B cell (primary cell): ENCODE measurements at regions of chr5 and their contacts with region 1.

Region 1: GRCh38 chr5:141618804-141619554 is at the start of gene DIAPH1:
- DNase-seq: peak; percentile 99
- ATAC-seq: peak; percentile 89
- H3K4me3 ChIP-seq: peak within 1 kb of the TSS; percentile 84 to 98 (median 94)
- H3K4me3 Mint-ChIP-seq: peak within 1 kb of the TSS; percentile 93
- H3K27ac ChIP-seq: peak within 1 kb of the TSS; percentile 86 to 92
- H3K27ac Mint-ChIP-seq: peak within 1 kb of the TSS; percentile 91
- H3K4me1 ChIP-seq: peaks cover 52 to 55% of the 10 kb centered on the region in 2 donors
- H3K4me1 Mint-ChIP-seq: peaks cover 59% of the 10 kb centered on the region
- H3K27me3 ChIP-seq: no peaks in the 10 kb centered on the region
- H3K27me3 Mint-ChIP-seq: no peaks in the 10 kb centered on the region
- CTCF ChIP-seq: peak; percentile 94
- total RNA-seq, gene DIAPH1: 111 and 113 TPM in 2 replicates

Region 2: DNA sequence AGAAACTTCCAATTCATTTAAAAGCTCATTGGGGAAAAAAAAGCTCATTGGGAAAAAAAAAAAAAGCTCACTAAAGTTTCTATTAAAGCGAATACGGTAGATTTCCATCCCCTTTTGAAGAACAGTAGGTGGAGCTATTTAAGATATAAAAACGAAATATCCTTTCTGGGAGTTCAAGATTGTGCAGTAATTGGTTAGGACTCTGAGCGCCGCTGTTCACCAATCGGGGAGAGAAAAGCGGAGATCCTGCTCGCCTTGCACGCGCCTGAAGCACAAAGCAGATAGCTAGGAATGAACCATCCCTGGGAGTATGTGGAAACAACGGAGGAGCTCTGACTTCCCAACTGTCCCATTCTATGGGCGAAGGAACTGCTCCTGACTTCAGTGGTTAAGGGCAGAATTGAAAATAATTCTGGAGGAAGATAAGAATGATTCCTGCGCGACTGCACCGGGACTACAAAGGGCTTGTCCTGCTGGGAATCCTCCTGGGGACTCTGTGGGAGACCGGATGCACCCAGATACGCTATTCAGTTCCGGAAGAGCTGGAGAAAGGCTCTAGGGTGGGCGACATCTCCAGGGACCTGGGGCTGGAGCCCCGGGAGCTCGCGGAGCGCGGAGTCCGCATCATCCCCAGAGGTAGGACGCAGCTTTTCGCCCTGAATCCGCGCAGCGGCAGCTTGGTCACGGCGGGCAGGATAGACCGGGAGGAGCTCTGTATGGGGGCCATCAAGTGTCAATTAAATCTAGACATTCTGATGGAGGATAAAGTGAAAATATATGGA is 188.5 kb before region 1 on chr5 and contains the start of gene PCDHGA12:
- CTCF ChIA-PET with region 1: no interaction called
- POLR2A ChIA-PET with region 1: no interaction called
- intact Hi-C with region 1: loop called (anchors 2 kb)
- DNase-seq: peak; percentile 65
- ATAC-seq: peak; percentile 82
- H3K4me3 ChIP-seq: peak within 1 kb of the TSS in 4 of 5 experiments; percentile 30 to 35 (median 32)
- H3K4me3 Mint-ChIP-seq: peak within 1 kb of the TSS; percentile 86
- H3K27ac ChIP-seq: no peak within 1 kb of the TSS
- H3K27ac Mint-ChIP-seq: peak within 1 kb of the TSS; percentile 29
- H3K4me1 ChIP-seq: peaks cover 15 to 17% of the 10 kb centered on the region in 2 donors
- H3K4me1 Mint-ChIP-seq: peaks cover 7% of the 10 kb centered on the region
- H3K27me3 ChIP-seq: peaks cover 0 to 57% (median 30%) of the 10 kb centered on the region in 4 experiments
- H3K27me3 Mint-ChIP-seq: peaks cover 46% of the 10 kb centered on the region
- CTCF ChIP-seq: peak; percentile 68
- total RNA-seq, gene PCDHGA12: 1.6 and 2.8 TPM in 2 replicates

Region 3: DNA sequence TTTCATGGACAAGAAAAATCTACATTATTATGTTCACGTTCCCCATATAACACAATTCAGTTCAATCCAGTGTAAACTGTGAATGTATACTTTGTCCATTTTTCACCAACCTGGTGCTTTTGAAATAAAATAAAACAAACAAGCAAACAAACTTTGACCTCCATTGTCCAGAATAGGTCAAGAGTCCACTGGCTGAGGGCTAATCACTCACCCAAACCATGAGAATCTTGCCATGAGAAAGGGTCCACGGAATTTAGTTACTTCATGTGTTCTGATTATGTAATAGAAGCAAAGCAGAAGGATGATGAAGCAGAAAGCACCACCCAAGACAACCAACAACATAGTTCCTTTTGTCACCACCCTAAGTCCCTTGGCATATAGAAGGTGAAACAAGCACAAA is 28.9 kb before region 1 on chr5:
- CTCF ChIA-PET with region 1: interaction called, 760 read pairs
- POLR2A ChIA-PET with region 1: interaction called, 34 read pairs
- intact Hi-C with region 1: loop called (anchors 1 kb)
- DNase-seq: no peak
- ATAC-seq: no peak
- H3K4me3 ChIP-seq: no peak overlapping the region
- H3K4me3 Mint-ChIP-seq: no peak overlapping the region
- H3K27ac ChIP-seq: no peak overlapping the region
- H3K27ac Mint-ChIP-seq: no peak overlapping the region
- H3K4me1 ChIP-seq: peaks cover 6 to 7% of the 10 kb centered on the region in 2 donors
- H3K4me1 Mint-ChIP-seq: peaks cover 17% of the 10 kb centered on the region
- H3K27me3 ChIP-seq: no peaks in the 10 kb centered on the region
- H3K27me3 Mint-ChIP-seq: no peaks in the 10 kb centered on the region
- CTCF ChIP-seq: no peak

Region 4: GRCh38 chr5:141598391-141599350 is 20.3 kb before region 1 on chr5:
- CTCF ChIA-PET with region 1: interaction called, 760 read pairs
- POLR2A ChIA-PET with region 1: interaction called, 8 read pairs
- intact Hi-C with region 1: no loop called
- DNase-seq: no peak
- ATAC-seq: no peak
- H3K4me3 ChIP-seq: no peak overlapping the region
- H3K4me3 Mint-ChIP-seq: peak overlapping the region; percentile 12
- H3K27ac ChIP-seq: peak overlapping the region in 1 of 2 donors; percentile 61
- H3K27ac Mint-ChIP-seq: no peak overlapping the region
- H3K4me1 ChIP-seq: peaks cover 23 to 40% of the 10 kb centered on the region in 2 donors
- H3K4me1 Mint-ChIP-seq: peaks cover 61% of the 10 kb centered on the region
- H3K27me3 ChIP-seq: no peaks in the 10 kb centered on the region
- H3K27me3 Mint-ChIP-seq: no peaks in the 10 kb centered on the region
- CTCF ChIP-seq: no peak

Region 5: GRCh38 chr5:141605523-141606277 is 13.3 kb before region 1 on chr5:
- CTCF ChIA-PET with region 1: interaction called, 50 read pairs
- POLR2A ChIA-PET with region 1: interaction called, 11 read pairs
- intact Hi-C with region 1: loop called (anchors 1 kb)
- DNase-seq: peak; percentile 88
- ATAC-seq: peak; percentile 98
- H3K4me3 ChIP-seq: peak overlapping the region in 3 of 5 experiments; percentile 12 to 45 (median 22)
- H3K4me3 Mint-ChIP-seq: peak overlapping the region; percentile 64
- H3K27ac ChIP-seq: peak overlapping the region; percentile 72 to 84
- H3K27ac Mint-ChIP-seq: peak overlapping the region; percentile 80
- H3K4me1 ChIP-seq: peaks cover 47 to 69% of the 10 kb centered on the region in 2 donors
- H3K4me1 Mint-ChIP-seq: peaks cover 70% of the 10 kb centered on the region
- H3K27me3 ChIP-seq: no peaks in the 10 kb centered on the region
- H3K27me3 Mint-ChIP-seq: no peaks in the 10 kb centered on the region
- CTCF ChIP-seq: peak; percentile 14

Region 6: DNA sequence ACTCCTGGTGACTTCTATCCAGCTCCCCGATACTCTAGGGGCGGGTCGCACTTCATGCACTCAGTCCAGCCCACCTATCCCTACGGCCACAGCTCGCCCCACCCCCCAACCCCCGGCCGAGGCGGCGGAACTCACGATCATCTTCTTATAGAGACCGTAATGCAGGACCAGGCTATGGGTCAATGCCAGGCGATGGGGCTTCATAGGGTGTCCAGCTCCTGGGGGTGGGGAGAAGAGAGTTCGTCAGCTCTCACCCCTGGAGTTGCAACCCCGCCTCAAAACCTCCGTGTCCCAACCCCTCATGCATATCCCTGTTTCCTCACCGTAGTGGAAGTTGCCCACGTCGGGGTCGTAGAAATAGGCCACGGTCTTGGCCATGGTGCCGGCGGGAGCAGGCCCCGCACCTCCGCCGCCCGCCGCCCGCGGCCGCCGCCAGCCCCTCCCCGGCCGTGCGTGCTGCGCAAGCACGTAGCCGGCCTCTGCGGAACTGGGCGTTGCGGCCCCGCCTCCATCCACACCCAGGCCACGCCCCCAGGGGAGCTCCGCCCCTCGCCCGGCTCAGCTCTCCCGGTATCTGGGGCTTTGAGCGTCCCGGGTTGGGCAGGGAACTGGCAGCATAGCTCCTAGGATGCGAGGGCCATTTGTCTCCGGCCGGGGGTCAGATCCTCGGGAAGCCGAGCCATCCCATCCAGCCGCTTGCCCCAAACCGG is 17.6 kb after region 1 on chr5 and contains the starts of genes HDAC3 and RELL2:
- CTCF ChIA-PET with region 1: interaction called, 116 read pairs
- POLR2A ChIA-PET with region 1: interaction called, 16 read pairs
- intact Hi-C with region 1: loop called (anchors 1 kb)
- DNase-seq: peak; percentile 94
- ATAC-seq: peak; percentile 89
- H3K4me3 ChIP-seq: peak within 1 kb of the TSS; percentile 70 to 99 (median 82)
- H3K4me3 Mint-ChIP-seq: peak within 1 kb of the TSS; percentile 94
- H3K27ac ChIP-seq: peak within 1 kb of the TSS; percentile 58 to 77
- H3K27ac Mint-ChIP-seq: peak within 1 kb of the TSS; percentile 85
- H3K4me1 ChIP-seq: peaks cover 30 to 36% of the 10 kb centered on the region in 2 donors
- H3K4me1 Mint-ChIP-seq: peaks cover 39% of the 10 kb centered on the region
- H3K27me3 ChIP-seq: no peaks in the 10 kb centered on the region
- H3K27me3 Mint-ChIP-seq: no peaks in the 10 kb centered on the region
- CTCF ChIP-seq: no peak
- total RNA-seq, gene HDAC3: 85.5 and 86.9 TPM in 2 replicates
- total RNA-seq, gene RELL2: 11.6 and 12.1 TPM in 2 replicates

Region 7: GRCh38 chr5:141650851-141651727 is 32.1 kb after region 1 on chr5 and contains the start of gene FCHSD1:
- CTCF ChIA-PET with region 1: interaction called, 11 read pairs
- POLR2A ChIA-PET with region 1: interaction called, 7 read pairs
- intact Hi-C with region 1: loop called (anchors 1 kb)
- DNase-seq: peak; percentile 89
- ATAC-seq: peak; percentile 100
- H3K4me3 ChIP-seq: peak within 1 kb of the TSS; percentile 53 to 84 (median 70)
- H3K4me3 Mint-ChIP-seq: peak within 1 kb of the TSS; percentile 99
- H3K27ac ChIP-seq: peak within 1 kb of the TSS; percentile 60 to 82
- H3K27ac Mint-ChIP-seq: peak within 1 kb of the TSS; percentile 98
- H3K4me1 ChIP-seq: peaks cover 14 to 22% of the 10 kb centered on the region in 2 donors
- H3K4me1 Mint-ChIP-seq: peaks cover 34% of the 10 kb centered on the region
- H3K27me3 ChIP-seq: peaks cover 0 to 8% (median 0%) of the 10 kb centered on the region in 4 experiments
- H3K27me3 Mint-ChIP-seq: peaks cover 7% of the 10 kb centered on the region
- CTCF ChIP-seq: no peak
- total RNA-seq, gene FCHSD1: 114 and 123 TPM in 2 replicates